ENCODE measurements at regions of chr10 and their contacts with region 1.

Region 1: GRCh38 chr10:91829268-91829667 is 31.0 kb downstream of the TNKS2 start:
- DNase-seq: no peak
- ATAC-seq: no peak
- H3K4me3 ChIP-seq: no peak overlapping the region
- H3K27ac ChIP-seq: no peak overlapping the region
- H3K4me1 ChIP-seq: no peaks in the 10 kb centered on the region
- H3K27me3 ChIP-seq: no peaks in the 10 kb centered on the region
- CTCF ChIP-seq: no peak
- POLR2A ChIP-seq: no peak
- RAD21 ChIP-seq: no peak

Region 2: GRCh38 chr10:91590142-91590903 is 238.9 kb before region 1 on chr10:
- CTCF ChIA-PET with region 1: no interaction called
- POLR2A ChIA-PET with region 1: no interaction called
- dilution Hi-C with region 1: no loop called
- in situ Hi-C with region 1: no loop called
- intact Hi-C with region 1: no loop called
- DNase-seq: peak; percentile 92
- ATAC-seq: peak; percentile 79
- H3K4me3 ChIP-seq: no peak overlapping the region
- H3K27ac ChIP-seq: peak overlapping the region; percentile 92
- H3K4me1 ChIP-seq: peaks cover 37% of the 10 kb centered on the region
- H3K27me3 ChIP-seq: no peaks in the 10 kb centered on the region
- CTCF ChIP-seq: no peak
- POLR2A ChIP-seq: no peak
- RAD21 ChIP-seq: no peak

Region 3: DNA sequence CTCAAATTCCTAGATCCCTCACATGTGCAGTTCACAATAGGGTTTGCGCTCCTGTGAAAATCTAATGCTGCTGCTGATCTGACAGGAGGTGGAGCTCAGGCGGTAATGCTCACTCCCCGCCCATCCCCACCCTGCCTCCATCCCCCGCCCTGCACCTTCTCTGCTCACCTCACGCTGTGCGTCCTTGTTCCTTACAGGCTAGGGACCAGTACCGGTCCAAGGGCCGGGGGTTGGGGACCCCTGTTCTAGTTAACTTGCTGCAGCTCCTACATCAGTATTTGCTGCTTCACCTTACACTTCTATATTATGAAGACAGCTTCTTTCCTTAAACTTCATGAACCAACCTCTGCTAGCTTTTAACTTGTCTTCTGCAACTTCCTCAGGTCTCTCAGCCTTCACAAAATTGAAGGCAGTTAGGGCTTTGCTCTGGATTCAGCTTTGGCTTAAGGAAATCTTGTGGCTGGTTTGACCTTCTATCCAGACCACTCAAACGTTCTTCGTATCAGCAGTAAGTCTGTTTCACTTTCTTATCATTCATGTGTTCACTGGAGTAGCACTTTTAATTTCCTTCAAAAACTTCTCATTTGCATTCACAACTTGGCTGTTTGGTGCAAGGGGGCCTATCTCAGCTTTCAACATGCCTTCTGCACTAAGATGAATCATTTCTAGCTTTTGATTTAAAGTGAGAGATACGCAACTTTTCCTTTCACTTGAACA is 32.8 kb before region 1 on chr10:
- CTCF ChIA-PET with region 1: no interaction called
- POLR2A ChIA-PET with region 1: no interaction called
- dilution Hi-C with region 1: no loop called
- in situ Hi-C with region 1: no loop called
- intact Hi-C with region 1: no loop called
- DNase-seq: no peak
- ATAC-seq: no peak
- H3K4me3 ChIP-seq: peak overlapping the region; percentile 36; the same call in 1 of the 2 replicates
- H3K27ac ChIP-seq: peak overlapping the region; percentile 25; the same call in 1 of the 2 replicates
- H3K4me1 ChIP-seq: 0 out of 2 replicates have a peak, but pooled peaks cover 2% of the 10 kb centered on the region
- H3K27me3 ChIP-seq: no peaks in the 10 kb centered on the region
- CTCF ChIP-seq: no peak
- POLR2A ChIP-seq: no peak
- RAD21 ChIP-seq: no peak

Region 4: GRCh38 chr10:91864099-91864498 is 34.8 kb after region 1 on chr10:
- CTCF ChIA-PET with region 1: no interaction called
- POLR2A ChIA-PET with region 1: no interaction called
- dilution Hi-C with region 1: no loop called
- in situ Hi-C with region 1: no loop called
- intact Hi-C with region 1: loop called (anchors 5 kb)
- DNase-seq: no peak
- ATAC-seq: no peak; the same call in 1 of the 2 replicates
- H3K4me3 ChIP-seq: no peak overlapping the region
- H3K27ac ChIP-seq: no peak overlapping the region
- H3K4me1 ChIP-seq: peaks cover 4% of the 10 kb centered on the region
- H3K27me3 ChIP-seq: no peaks in the 10 kb centered on the region
- CTCF ChIP-seq: no peak
- POLR2A ChIP-seq: no peak
- RAD21 ChIP-seq: no peak